ENCODE measurements at regions of chr1 and their contacts with region 1.

Region 1: GRCh38 chr1:168342572-168343280 is 62.0 kb downstream of the TBX19 start:
- DNase-seq: peak; percentile 66 to 90 (median 86)
- ATAC-seq: peak; percentile 100
- H3K4me3 ChIP-seq: peak overlapping the region; percentile 30
- H3K4me3 Mint-ChIP-seq: peak overlapping the region in 9 of 10 donors; percentile 5 to 66 (median 57)
- H3K27ac ChIP-seq: peak overlapping the region; percentile 12
- H3K27ac Mint-ChIP-seq: peak overlapping the region; percentile 80 to 96 (median 90)
- H3K4me1 ChIP-seq: peaks cover 0 to 33% of the 10 kb centered on the region in 2 donors
- H3K4me1 Mint-ChIP-seq: peaks cover 13 to 55% (median 31%) of the 10 kb centered on the region in 7 donors
- H3K27me3 ChIP-seq: no peaks in the 10 kb centered on the region
- H3K27me3 Mint-ChIP-seq: no peaks in the 10 kb centered on the region

Region 2: GRCh38 chr1:167803358-167804207 is 539.1 kb before region 1 on chr1:
- CTCF ChIA-PET with region 1: no interaction called
- POLR2A ChIA-PET with region 1: no interaction called
- intact Hi-C with region 1: no loop called
- DNase-seq: peak; percentile 41 to 83 (median 67)
- ATAC-seq: peak; percentile 95
- H3K4me3 ChIP-seq: no peak overlapping the region
- H3K4me3 Mint-ChIP-seq: peak overlapping the region in 9 of 10 donors; percentile 5 to 74 (median 60)
- H3K27ac ChIP-seq: no peak overlapping the region
- H3K27ac Mint-ChIP-seq: peak overlapping the region in 6 of 9 donors; percentile 38 to 93 (median 83)
- H3K4me1 ChIP-seq: peaks cover 20 to 21% of the 10 kb centered on the region in 2 donors
- H3K4me1 Mint-ChIP-seq: peaks cover 16 to 29% (median 26%) of the 10 kb centered on the region in 7 donors
- H3K27me3 ChIP-seq: no peaks in the 10 kb centered on the region
- H3K27me3 Mint-ChIP-seq: peaks cover 0 to 7% (median 0%) of the 10 kb centered on the region in 5 donors

Region 3: DNA sequence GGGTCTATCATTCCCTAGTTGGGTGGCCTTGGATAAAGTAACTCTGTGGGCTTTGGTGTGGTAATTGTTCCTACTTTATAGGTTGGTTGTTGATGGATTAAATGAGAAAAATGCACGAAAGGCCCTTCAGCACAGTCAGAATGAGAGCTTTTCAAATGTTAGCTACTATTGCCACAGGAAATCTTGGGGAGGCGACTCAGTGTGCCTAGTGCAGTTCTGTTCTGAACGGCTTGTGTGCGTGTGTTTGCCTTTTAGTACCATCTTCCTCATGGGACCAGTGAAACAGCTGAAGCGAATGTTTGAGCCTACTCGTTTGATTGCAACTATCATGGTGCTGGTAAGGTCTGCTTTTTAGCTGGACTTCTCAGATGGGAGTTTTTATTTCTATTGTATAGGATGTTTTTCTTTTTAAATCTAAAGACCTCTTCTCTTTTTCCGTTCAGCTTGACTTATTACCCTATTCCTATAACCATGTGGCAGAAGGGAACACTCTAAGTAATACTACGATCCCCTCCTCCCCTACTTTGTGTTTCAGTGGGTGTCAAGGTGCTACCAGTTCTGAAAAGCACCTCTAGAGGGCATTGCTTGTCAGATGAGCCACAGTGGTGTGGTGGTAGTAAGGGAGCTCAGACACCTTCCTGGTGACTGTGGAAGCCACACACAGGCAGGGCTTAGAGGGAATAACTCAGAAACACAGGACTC is 107.7 kb before region 1 on chr1:
- CTCF ChIA-PET with region 1: no interaction called
- POLR2A ChIA-PET with region 1: no interaction called
- intact Hi-C with region 1: loop called in 1 of 2 experiments (anchors 5 kb)
- DNase-seq: peak in 7 of 9 donors; percentile 17 to 38 (median 27)
- ATAC-seq: peak; percentile 95
- H3K4me3 ChIP-seq: no peak overlapping the region
- H3K4me3 Mint-ChIP-seq: peak overlapping the region in 1 of 10 donors; percentile 26
- H3K27ac ChIP-seq: no peak overlapping the region
- H3K27ac Mint-ChIP-seq: peak overlapping the region in 4 of 9 donors; percentile 1 to 68 (median 34)
- H3K4me1 ChIP-seq: peaks cover 9 to 11% of the 10 kb centered on the region in 2 donors
- H3K4me1 Mint-ChIP-seq: peaks cover 33 to 71% (median 61%) of the 10 kb centered on the region in 7 donors
- H3K27me3 ChIP-seq: no peaks in the 10 kb centered on the region
- H3K27me3 Mint-ChIP-seq: no peaks in the 10 kb centered on the region

Region 4: DNA sequence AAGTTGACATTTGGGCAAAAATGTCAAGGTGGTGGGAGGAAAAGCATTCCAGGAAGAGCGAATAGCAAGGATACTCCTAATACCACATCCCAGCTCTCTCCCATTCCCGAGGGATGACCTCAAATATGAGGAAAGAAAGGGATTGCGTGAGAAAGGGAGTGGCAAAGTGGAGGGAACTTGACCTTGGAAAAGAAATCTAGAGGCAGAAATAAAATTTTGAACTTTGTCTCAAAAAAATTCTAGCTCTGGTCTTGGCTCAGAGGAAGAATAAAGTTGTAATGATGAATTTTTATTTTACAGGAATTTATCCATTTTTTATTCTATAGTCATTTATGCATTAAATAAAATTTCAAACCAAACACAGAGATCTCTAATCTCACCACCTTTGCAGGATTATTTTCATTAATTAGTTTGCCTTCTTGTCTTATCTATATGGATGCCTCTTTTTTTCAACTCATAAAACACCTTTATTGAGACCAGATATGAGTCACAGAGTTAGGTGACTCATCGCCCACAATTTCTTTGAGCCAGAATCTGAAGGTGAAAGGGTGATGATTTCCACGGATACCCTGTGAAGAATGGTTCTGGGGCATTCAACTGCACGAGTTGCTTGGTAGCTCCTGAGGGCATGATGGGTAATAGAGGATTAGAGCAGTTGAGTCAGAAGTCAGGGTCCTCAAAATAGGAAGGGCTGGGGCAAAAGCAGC is 66.0 kb after region 1 on chr1:
- CTCF ChIA-PET with region 1: no interaction called
- POLR2A ChIA-PET with region 1: no interaction called
- intact Hi-C with region 1: loop called in 1 of 2 experiments (anchors 2 kb)
- DNase-seq: peak in 2 of 9 donors; percentile 21 to 53
- ATAC-seq: peak; percentile 64
- H3K4me3 ChIP-seq: peak overlapping the region; percentile 7
- H3K4me3 Mint-ChIP-seq: peak overlapping the region in 9 of 10 donors; percentile 30 to 80 (median 60)
- H3K27ac ChIP-seq: no peak overlapping the region
- H3K27ac Mint-ChIP-seq: peak overlapping the region; percentile 5 to 85 (median 65)
- H3K4me1 ChIP-seq: peaks cover 11 to 31% of the 10 kb centered on the region in 2 donors
- H3K4me1 Mint-ChIP-seq: peaks cover 17 to 50% (median 34%) of the 10 kb centered on the region in 7 donors
- H3K27me3 ChIP-seq: no peaks in the 10 kb centered on the region
- H3K27me3 Mint-ChIP-seq: no peaks in the 10 kb centered on the region

Region 5: GRCh38 chr1:168572633-168573032 is 229.9 kb after region 1 on chr1:
- CTCF ChIA-PET with region 1: interaction called, 9 read pairs
- POLR2A ChIA-PET with region 1: no interaction called
- intact Hi-C with region 1: loop called in 1 of 2 experiments (anchors 1 kb)
- DNase-seq: no peak
- ATAC-seq: no peak
- H3K4me3 ChIP-seq: no peak overlapping the region
- H3K4me3 Mint-ChIP-seq: no peak overlapping the region
- H3K27ac ChIP-seq: no peak overlapping the region
- H3K27ac Mint-ChIP-seq: no peak overlapping the region
- H3K4me1 ChIP-seq: peaks cover 0 to 4% of the 10 kb centered on the region in 2 donors
- H3K4me1 Mint-ChIP-seq: peaks cover 3 to 26% (median 8%) of the 10 kb centered on the region in 7 donors
- H3K27me3 ChIP-seq: no peaks in the 10 kb centered on the region
- H3K27me3 Mint-ChIP-seq: peaks cover 0 to 28% (median 0%) of the 10 kb centered on the region in 5 donors

Region 6: DNA sequence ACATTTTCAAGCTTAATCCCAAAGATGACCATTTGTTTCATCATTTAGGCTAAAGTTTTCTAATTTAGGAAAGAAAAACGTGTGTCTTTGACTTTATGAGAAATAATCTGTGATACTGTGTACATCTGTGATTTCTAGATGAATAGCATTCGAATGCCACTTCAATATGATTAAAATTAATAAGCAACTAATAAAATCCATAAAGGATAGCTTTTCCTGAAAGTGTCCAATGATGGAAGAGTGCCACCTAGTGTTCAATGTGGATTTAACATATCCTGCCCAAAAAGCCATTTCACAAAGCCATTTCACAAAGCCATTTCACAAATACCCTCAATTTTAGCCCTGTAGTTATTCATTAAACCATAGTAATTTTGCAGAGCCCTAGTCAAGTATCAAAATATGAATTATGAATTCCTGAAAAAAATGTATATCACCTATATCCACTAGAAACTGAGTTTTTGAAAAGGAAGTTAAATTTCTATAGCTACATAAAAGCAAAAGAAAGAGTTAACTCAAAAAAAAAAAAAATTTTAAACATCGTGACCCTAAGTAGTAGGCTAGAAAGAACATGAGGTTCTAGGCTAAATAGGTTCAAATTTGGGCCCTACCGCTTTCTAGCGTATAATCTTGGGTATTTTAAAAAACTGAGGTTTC is 1005.8 kb after region 1 on chr1:
- CTCF ChIA-PET with region 1: interaction called, 78 read pairs
- POLR2A ChIA-PET with region 1: interaction called, 3 read pairs
- intact Hi-C with region 1: loop called in 1 of 2 experiments (anchors 1 kb)
- DNase-seq: peak in 7 of 9 donors; percentile 12 to 56 (median 39)
- ATAC-seq: peak; percentile 60
- H3K4me3 ChIP-seq: no peak overlapping the region
- H3K4me3 Mint-ChIP-seq: no peak overlapping the region
- H3K27ac ChIP-seq: no peak overlapping the region
- H3K27ac Mint-ChIP-seq: no peak overlapping the region
- H3K4me1 ChIP-seq: no peaks in the 10 kb centered on the region
- H3K4me1 Mint-ChIP-seq: peaks cover 0 to 18% (median 8%) of the 10 kb centered on the region in 7 donors
- H3K27me3 ChIP-seq: no peaks in the 10 kb centered on the region
- H3K27me3 Mint-ChIP-seq: peaks cover 0 to 3% (median 0%) of the 10 kb centered on the region in 5 donors

Region 7: GRCh38 chr1:169893494-169894362 is 1551.0 kb after region 1 on chr1 and contains the start of gene SCYL3:
- CTCF ChIA-PET with region 1: no interaction called
- POLR2A ChIA-PET with region 1: no interaction called
- intact Hi-C with region 1: loop called in 1 of 2 experiments (anchors 5 kb)
- DNase-seq: peak; percentile 85 to 97 (median 95)
- ATAC-seq: peak; percentile 92
- H3K4me3 ChIP-seq: peak within 1 kb of the TSS; percentile 77
- H3K4me3 Mint-ChIP-seq: peak within 1 kb of the TSS; percentile 85 to 97 (median 94)
- H3K27ac ChIP-seq: peak within 1 kb of the TSS; percentile 95
- H3K27ac Mint-ChIP-seq: peak within 1 kb of the TSS; percentile 98 to 100 (median 100)
- H3K4me1 ChIP-seq: peaks cover 25 to 28% of the 10 kb centered on the region in 2 donors
- H3K4me1 Mint-ChIP-seq: peaks cover 26 to 51% (median 46%) of the 10 kb centered on the region in 7 donors
- H3K27me3 ChIP-seq: no peaks in the 10 kb centered on the region
- H3K27me3 Mint-ChIP-seq: peaks cover 0 to 18% (median 4%) of the 10 kb centered on the region in 5 donors
- total RNA-seq, gene SCYL3: 9.5 to 22.7 (median 17.3) TPM

Measured in naive thymus-derived CD4-positive, alpha-beta T cell (primary cell).